HEK293T (cell line): ENCODE measurements at regions of chr17 and their contacts with region 1.

Region 1: GRCh38 chr17:81484195-81484979 is 28.2 kb downstream of the ACTG1 start:
- DNase-seq: peak; percentile 91

Region 2: DNA sequence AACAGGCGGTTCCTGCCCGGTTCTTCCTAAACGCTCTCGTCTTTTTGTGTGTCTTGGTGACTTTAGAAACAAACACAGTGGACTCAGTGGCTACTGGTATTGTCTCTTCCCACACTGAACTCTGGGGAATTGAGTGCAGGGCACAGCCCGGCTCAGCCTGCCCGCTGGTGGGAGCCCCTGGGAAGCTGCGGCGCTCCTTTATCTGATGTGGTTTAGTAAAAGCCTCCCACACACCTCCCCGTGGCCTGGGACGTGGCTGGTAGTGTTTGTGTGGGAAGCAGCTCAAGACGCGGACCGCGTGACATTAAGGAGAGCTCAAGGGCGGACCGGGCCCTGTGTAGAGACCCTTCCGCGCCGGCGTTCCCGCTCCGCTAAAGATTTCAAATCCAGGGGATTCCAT is 374.4 kb before region 1 on chr17:
- CTCF ChIA-PET with region 1: no interaction called
- POLR2A ChIA-PET with region 1: no interaction called
- DNase-seq: no peak

Region 3: DNA sequence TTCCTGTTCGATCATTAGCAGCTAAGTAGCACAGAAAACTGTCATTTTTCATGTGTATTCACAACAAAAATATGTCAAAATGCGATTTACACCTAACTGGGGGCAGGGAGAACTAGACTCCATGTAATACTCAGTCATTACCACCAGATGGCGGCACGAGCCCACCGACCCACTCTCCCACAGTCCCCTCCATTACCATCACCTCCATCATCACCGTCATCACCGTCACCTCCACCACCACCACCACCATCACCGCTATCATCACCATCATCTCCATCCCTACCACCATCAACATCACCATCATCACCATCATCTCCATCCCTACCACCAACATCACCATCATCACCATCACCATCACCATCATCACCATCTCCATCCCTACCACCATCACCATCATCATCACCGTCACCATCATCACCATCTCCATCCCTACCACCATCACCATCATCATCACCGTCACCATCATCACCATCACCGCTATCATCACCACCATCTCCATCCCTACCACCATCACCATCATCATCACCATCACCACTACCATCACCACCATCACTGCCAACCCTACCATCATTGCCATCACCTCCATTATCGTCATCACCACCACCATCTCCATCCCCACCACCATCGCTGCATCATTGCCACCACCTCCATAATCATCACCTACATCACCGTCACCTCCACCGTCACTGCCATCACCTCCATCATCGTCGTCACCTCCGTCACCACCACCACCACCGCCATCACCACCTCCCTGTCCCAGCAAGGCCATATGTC is 230.8 kb before region 1 on chr17:
- CTCF ChIA-PET with region 1: interaction called, 18 read pairs
- POLR2A ChIA-PET with region 1: interaction called, 4 read pairs
- DNase-seq: peak; percentile 74

Region 4: GRCh38 chr17:81291662-81292061 is 192.7 kb before region 1 on chr17:
- CTCF ChIA-PET with region 1: interaction called, 15 read pairs
- POLR2A ChIA-PET with region 1: interaction called, 9 read pairs
- DNase-seq: peak; percentile 86

Region 5: GRCh38 chr17:81394921-81395599 is 89.3 kb before region 1 on chr17 and contains the start of gene BAHCC1:
- CTCF ChIA-PET with region 1: interaction called, 22 read pairs
- POLR2A ChIA-PET with region 1: interaction called, 18 read pairs
- DNase-seq: peak; percentile 92

Region 6: GRCh38 chr17:81512560-81513371 is 28.4 kb after region 1 on chr17 and contains the start of gene ACTG1:
- CTCF ChIA-PET with region 1: interaction called, 6 read pairs
- POLR2A ChIA-PET with region 1: interaction called, 66 read pairs
- DNase-seq: peak; percentile 96

Region 7: DNA sequence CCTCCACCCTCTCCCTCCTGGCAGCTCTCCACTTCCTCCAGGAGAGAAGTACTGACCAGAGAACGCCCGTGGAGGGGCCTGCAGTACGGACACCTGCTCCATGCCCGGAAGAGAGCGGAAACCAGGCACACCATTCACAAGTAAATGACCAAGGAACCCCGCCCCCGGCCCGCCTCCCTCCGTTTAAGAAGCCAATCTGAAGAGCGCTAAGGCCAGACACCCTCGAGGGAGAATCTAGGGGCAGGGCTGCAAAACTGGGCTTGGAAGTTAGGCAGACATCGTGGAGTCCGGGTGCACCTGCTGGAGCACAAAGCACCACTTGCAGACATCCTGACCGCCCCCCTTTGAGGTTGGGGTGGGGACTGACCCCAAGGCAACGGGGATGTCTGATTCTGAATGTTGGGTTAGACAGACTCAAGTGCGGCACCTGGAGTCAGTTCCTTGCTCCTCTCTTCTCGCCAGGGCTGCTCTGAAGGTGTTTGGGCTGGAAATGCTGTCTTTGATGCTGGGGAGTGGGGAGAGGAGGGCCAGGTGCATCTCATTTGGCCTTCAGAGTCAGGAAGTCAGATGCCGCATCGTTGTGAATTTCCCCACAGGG is 68.7 kb after region 1 on chr17:
- CTCF ChIA-PET with region 1: interaction called, 3 read pairs
- POLR2A ChIA-PET with region 1: interaction called, 10 read pairs
- DNase-seq: peak; percentile 79

Region 8: DNA sequence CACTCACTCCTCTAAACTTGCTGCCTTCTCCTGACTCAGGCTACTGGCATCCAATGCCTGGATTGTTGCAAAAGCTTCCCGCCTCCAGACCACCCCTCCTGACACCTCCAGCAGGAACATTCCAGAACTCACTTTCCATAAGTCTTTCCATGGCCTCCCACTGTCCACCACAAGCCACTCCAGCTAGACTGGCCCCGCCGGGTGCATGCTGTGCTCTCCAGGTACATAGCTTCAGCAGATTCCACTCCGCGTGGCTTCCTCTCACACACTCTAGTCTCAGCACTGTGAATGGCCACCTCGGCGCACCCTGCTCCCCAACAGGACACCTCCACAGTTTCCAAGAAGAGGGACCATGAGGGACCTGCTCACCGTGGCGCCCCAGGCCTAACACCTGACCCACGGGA is 93.7 kb after region 1 on chr17:
- CTCF ChIA-PET with region 1: no interaction called
- POLR2A ChIA-PET with region 1: no interaction called
- DNase-seq: no peak